Left lung (tissue), 14 donors: ENCODE measurements at regions of chrX and their contacts with region 1.

Region 1: DNA sequence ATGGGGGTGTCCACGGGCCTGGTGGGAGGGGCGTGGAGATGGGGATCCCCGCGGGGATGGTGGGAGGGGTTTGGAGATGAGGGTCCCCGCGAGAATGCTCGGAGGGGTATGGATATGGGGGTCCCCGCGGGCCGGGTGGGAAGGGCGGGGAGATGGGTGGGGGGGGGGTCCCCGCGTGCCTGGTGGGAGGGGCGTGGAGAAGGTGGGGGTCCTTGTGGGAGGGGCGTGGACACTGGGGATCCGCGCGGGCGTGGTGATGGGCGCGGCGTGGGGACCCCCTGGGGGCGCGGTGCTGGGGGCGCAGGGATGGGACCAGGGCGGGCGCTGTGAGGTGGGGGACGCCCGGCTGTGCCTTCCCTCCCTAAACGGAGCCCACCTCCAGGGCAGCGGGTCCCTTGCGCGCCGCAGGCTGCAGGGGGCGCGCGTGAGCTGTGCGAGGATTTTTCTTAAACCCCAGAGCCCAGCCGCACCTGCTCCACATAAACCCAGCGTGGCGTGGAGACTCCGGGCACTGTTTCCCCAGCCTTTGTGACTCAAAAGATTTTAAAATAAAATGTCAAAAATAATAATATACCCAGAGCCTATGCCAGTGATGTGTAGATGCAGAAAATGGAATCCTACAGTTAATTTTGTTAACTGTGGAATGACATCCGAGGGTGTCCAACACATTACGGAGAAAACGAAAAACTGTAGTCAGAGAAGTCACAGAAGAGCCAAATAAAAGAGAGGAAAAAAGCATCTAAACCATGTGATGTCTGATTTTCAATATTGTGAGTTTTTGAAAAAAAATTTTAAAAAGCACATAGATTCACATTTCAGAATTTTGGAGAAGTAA is 1.5 kb upstream of the ASMTL start:
- DNase-seq: peak; percentile 50 to 97 (median 84)
- ATAC-seq: peak; percentile 53
- H3K4me3 ChIP-seq: peak overlapping the region; percentile 19 to 61
- H3K27ac ChIP-seq: peak overlapping the region in 1 of 2 donors; percentile 64
- H3K4me1 ChIP-seq: peaks cover 0 to 12% of the 10 kb centered on the region in 2 donors
- H3K27me3 ChIP-seq: no peaks in the 10 kb centered on the region
- CTCF ChIP-seq: peak; percentile 97

Region 2: DNA sequence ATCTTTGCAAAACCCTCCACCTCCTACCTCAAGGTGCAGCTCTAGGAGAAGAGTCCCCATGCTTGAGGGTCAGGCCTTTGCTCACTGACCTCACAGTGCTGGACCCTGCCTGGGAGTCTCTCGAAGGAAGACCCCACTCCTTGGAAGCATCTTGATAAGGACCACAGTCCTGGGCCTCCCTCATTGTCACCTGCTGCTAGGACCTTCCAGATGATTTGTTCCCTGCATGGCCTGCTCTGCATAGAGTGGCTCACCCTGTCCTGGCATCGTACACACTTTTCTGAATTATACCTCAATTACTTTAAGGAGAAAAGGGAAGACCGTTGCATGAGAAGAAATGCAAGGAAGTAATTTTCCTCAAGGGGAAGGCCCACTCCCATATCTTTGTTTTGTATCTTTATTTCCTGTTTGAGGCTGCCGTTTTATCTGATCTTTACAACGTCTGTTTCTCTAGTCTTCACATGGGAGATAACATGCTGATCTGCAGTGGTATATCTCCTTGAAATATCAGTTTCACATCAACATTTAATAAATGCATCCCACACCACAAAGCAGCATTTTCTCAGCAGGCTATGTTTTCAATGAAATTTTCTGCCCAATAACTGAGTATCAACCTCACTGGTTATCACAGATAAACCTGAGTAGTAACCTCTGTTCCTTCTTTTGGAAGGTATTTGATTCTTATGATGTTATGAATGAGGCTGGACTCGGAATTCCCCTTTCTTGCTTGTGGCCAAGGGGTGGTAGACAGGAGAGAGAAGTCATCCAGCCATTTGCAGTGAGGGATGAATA is 122.2 kb after region 1 on chrX:
- intact Hi-C with region 1: loop called in 1 of 2 experiments (anchors 10 kb)
- DNase-seq: no peak
- ATAC-seq: no peak
- H3K4me3 ChIP-seq: no peak overlapping the region
- H3K27ac ChIP-seq: no peak overlapping the region
- H3K4me1 ChIP-seq: no peaks in the 10 kb centered on the region
- H3K27me3 ChIP-seq: no peaks in the 10 kb centered on the region
- CTCF ChIP-seq: no peak